PC-9 (cell line): ENCODE measurements at regions of chr12 and their contacts with region 1.

Region 1: GRCh38 chr12:97556302-97556798 is 93.7 kb downstream of the RMST start:
- DNase-seq: peak; percentile 61 to 73
- H3K4me3 ChIP-seq: no peak overlapping the region
- H3K27ac ChIP-seq: no peak overlapping the region
- H3K4me1 ChIP-seq: peaks cover 18% of the 10 kb centered on the region
- H3K27me3 ChIP-seq: no peaks in the 10 kb centered on the region
- CTCF ChIP-seq: no peak

Region 2: GRCh38 chr12:97568458-97569180 is 12.3 kb after region 1 on chr12:
- CTCF ChIA-PET with region 1: no interaction called
- POLR2A ChIA-PET with region 1: interaction called, 5 read pairs
- intact Hi-C with region 1: loop called (anchors 1 kb)
- DNase-seq: peak; percentile 57 to 99
- H3K4me3 ChIP-seq: peak overlapping the region; percentile 17; the same call in 1 of the 2 replicates
- H3K27ac ChIP-seq: peak overlapping the region; percentile 75
- H3K4me1 ChIP-seq: peaks cover 51% of the 10 kb centered on the region
- H3K27me3 ChIP-seq: no peaks in the 10 kb centered on the region
- CTCF ChIP-seq: no peak

Region 3: GRCh38 chr12:97659117-97659880 is 102.9 kb after region 1 on chr12:
- CTCF ChIA-PET with region 1: no interaction called
- POLR2A ChIA-PET with region 1: no interaction called
- intact Hi-C with region 1: loop called (anchors 1 kb)
- DNase-seq: no peak
- H3K4me3 ChIP-seq: no peak overlapping the region
- H3K27ac ChIP-seq: no peak overlapping the region
- H3K4me1 ChIP-seq: no peaks in the 10 kb centered on the region
- H3K27me3 ChIP-seq: peaks cover 10% of the 10 kb centered on the region; the same call in 1 of the 2 replicates
- CTCF ChIP-seq: no peak